Activated CD4-positive, alpha-beta T cell treated with anti-CD3 and anti-CD28 coated beads for 36 hours (primary cell): ENCODE measurements at regions of chr6 and their contacts with region 1.

Region 1: GRCh38 chr6:14031516-14031915 is 86.1 kb upstream of the CD83 start:
- DNase-seq: no peak
- ATAC-seq: no peak
- H3K4me3 Mint-ChIP-seq: no peak overlapping the region
- H3K27ac Mint-ChIP-seq: no peak overlapping the region
- H3K4me1 Mint-ChIP-seq: no peaks in the 10 kb centered on the region
- H3K27me3 Mint-ChIP-seq: peaks cover 15% of the 10 kb centered on the region

Region 2: GRCh38 chr6:14046476-14047068 is 15.1 kb after region 1 on chr6:
- CTCF ChIA-PET with region 1: interaction called, 36 read pairs
- POLR2A ChIA-PET with region 1: no interaction called
- intact Hi-C with region 1: no loop called
- DNase-seq: peak; percentile 70
- ATAC-seq: peak; percentile 95
- H3K4me3 Mint-ChIP-seq: no peak overlapping the region
- H3K27ac Mint-ChIP-seq: no peak overlapping the region
- H3K4me1 Mint-ChIP-seq: no peaks in the 10 kb centered on the region
- H3K27me3 Mint-ChIP-seq: peaks cover 22% of the 10 kb centered on the region

Region 3: DNA sequence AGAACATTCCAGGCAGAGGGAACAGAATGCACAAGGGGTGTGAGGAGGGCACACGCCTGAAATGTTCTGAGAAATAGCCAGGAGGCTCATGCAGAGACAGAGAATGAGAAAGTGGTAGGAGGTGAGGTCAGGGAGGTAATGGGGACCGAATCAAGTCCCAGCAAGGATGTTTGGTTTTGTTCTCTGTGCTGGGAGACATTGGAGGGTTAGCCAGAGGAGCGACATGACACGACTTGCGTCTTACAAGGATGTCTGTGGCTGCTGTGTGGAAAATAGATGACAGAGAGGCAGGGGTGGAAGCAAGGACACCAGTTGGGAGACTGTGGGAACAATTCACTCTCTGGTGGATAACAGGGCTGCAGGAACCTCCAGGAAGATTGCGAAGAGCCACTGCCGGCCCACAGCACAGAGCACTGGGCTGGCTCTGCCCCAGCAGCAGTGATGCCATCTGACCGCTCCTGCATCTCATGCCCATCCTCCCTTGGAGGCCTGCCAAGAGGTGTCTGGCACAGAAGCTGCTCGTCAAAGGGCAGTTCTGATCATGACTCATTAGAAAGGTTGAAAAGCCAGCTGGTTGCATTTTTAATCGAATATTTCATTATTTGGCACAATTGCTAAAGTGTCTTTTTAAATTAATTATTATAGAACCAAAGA is 28.4 kb after region 1 on chr6:
- CTCF ChIA-PET with region 1: no interaction called
- POLR2A ChIA-PET with region 1: no interaction called
- intact Hi-C with region 1: no loop called
- DNase-seq: no peak
- ATAC-seq: no peak
- H3K4me3 Mint-ChIP-seq: no peak overlapping the region
- H3K27ac Mint-ChIP-seq: no peak overlapping the region
- H3K4me1 Mint-ChIP-seq: no peaks in the 10 kb centered on the region
- H3K27me3 Mint-ChIP-seq: peaks cover 26% of the 10 kb centered on the region

Region 4: GRCh38 chr6:14121936-14122344 is 90.4 kb after region 1 on chr6:
- CTCF ChIA-PET with region 1: no interaction called
- POLR2A ChIA-PET with region 1: no interaction called
- intact Hi-C with region 1: no loop called
- DNase-seq: peak; percentile 73
- ATAC-seq: peak; percentile 76
- H3K4me3 Mint-ChIP-seq: peak overlapping the region; percentile 16
- H3K27ac Mint-ChIP-seq: peak overlapping the region; percentile 80
- H3K4me1 Mint-ChIP-seq: peaks cover 65% of the 10 kb centered on the region
- H3K27me3 Mint-ChIP-seq: no peaks in the 10 kb centered on the region

Region 5: DNA sequence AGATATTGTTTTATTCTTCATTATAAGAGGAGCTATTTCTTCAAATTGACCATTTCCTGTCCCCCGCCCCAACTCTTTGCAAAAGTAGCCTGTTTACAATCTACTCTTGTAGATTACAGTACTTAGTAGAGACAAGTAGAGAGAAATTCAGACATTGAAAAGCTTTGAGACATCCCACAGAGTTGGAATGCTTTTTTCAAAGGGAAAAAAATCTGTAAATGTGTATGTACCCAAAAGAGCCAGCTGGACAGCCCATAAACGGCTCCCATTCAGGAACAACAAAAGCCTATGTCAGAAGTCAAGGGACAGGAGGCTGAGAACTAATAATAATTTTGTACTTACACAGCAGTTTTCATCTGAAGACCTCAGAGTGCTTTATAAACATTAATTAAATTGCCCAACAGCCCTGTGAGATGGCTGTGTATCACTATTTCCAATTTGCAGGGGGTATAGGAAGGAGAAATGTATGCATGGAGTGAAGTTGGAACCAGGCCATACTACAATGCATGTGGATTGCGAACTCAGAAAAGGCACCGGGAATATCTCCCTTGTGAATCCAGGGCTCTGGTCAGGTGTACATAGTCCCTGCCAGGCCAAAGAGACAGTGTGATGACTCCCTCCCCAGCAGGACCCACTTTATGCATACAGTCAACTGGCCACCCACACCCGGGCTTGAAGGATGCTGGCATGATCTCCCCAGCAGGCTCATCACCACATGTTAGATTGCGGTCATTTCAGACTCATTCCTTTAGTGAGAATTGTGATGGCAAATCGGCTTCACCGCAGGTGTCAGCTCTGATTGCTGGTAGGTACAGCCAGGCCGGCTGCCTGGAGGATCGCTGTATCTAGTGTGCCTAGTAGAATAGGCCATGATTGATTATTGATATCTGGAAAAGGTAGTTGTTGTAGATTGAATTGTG is 110.3 kb after region 1 on chr6:
- CTCF ChIA-PET with region 1: no interaction called
- POLR2A ChIA-PET with region 1: no interaction called
- intact Hi-C with region 1: no loop called
- DNase-seq: no peak
- ATAC-seq: no peak
- H3K4me3 Mint-ChIP-seq: no peak overlapping the region
- H3K27ac Mint-ChIP-seq: no peak overlapping the region
- H3K4me1 Mint-ChIP-seq: peaks cover 5% of the 10 kb centered on the region
- H3K27me3 Mint-ChIP-seq: no peaks in the 10 kb centered on the region